ENCODE measurements at regions of chr10 and their contacts with region 1.

Region 1: GRCh38 chr10:71696628-71697326 is 22.8 kb downstream of the C10orf105 start:
- DNase-seq: peak; percentile 76
- H3K4me3 Mint-ChIP-seq: no peak overlapping the region
- H3K27ac Mint-ChIP-seq: no peak overlapping the region
- H3K4me1 Mint-ChIP-seq: peaks cover 35% of the 10 kb centered on the region
- H3K27me3 Mint-ChIP-seq: no peaks in the 10 kb centered on the region

Region 2: GRCh38 chr10:71314028-71314693 is 382.6 kb before region 1 on chr10:
- CTCF ChIA-PET with region 1: interaction called, 4 read pairs
- intact Hi-C with region 1: loop called (anchors 1 kb)
- DNase-seq: peak; percentile 62
- H3K4me3 Mint-ChIP-seq: no peak overlapping the region
- H3K27ac Mint-ChIP-seq: no peak overlapping the region
- H3K4me1 Mint-ChIP-seq: peaks cover 18% of the 10 kb centered on the region
- H3K27me3 Mint-ChIP-seq: peaks cover 5% of the 10 kb centered on the region

Region 3: GRCh38 chr10:71396084-71396720 is 300.6 kb before region 1 on chr10:
- CTCF ChIA-PET with region 1: interaction called, 5 read pairs
- intact Hi-C with region 1: loop called (anchors 2 kb)
- DNase-seq: peak; percentile 62
- H3K4me3 Mint-ChIP-seq: peak overlapping the region; percentile 45
- H3K27ac Mint-ChIP-seq: no peak overlapping the region
- H3K4me1 Mint-ChIP-seq: peaks cover 2% of the 10 kb centered on the region
- H3K27me3 Mint-ChIP-seq: peaks cover 58% of the 10 kb centered on the region

Region 4: GRCh38 chr10:71462062-71462935 is 234.5 kb before region 1 on chr10:
- CTCF ChIA-PET with region 1: no interaction called
- intact Hi-C with region 1: no loop called
- DNase-seq: no peak
- H3K4me3 Mint-ChIP-seq: no peak overlapping the region
- H3K27ac Mint-ChIP-seq: no peak overlapping the region
- H3K4me1 Mint-ChIP-seq: no peaks in the 10 kb centered on the region
- H3K27me3 Mint-ChIP-seq: no peaks in the 10 kb centered on the region

Region 5: GRCh38 chr10:71713135-71714030 is 16.6 kb after region 1 on chr10:
- CTCF ChIA-PET with region 1: interaction called, 138 read pairs
- intact Hi-C with region 1: no loop called
- DNase-seq: peak; percentile 54
- H3K4me3 Mint-ChIP-seq: peak overlapping the region; percentile 67
- H3K27ac Mint-ChIP-seq: peak overlapping the region; percentile 94
- H3K4me1 Mint-ChIP-seq: peaks cover 64% of the 10 kb centered on the region
- H3K27me3 Mint-ChIP-seq: no peaks in the 10 kb centered on the region

Region 6: GRCh38 chr10:71812016-71812912 is 115.5 kb after region 1 on chr10:
- CTCF ChIA-PET with region 1: interaction called, 25 read pairs
- intact Hi-C with region 1: no loop called
- DNase-seq: peak; percentile 83
- H3K4me3 Mint-ChIP-seq: no peak overlapping the region
- H3K27ac Mint-ChIP-seq: no peak overlapping the region
- H3K4me1 Mint-ChIP-seq: peaks cover 2% of the 10 kb centered on the region
- H3K27me3 Mint-ChIP-seq: no peaks in the 10 kb centered on the region

Region 7: DNA sequence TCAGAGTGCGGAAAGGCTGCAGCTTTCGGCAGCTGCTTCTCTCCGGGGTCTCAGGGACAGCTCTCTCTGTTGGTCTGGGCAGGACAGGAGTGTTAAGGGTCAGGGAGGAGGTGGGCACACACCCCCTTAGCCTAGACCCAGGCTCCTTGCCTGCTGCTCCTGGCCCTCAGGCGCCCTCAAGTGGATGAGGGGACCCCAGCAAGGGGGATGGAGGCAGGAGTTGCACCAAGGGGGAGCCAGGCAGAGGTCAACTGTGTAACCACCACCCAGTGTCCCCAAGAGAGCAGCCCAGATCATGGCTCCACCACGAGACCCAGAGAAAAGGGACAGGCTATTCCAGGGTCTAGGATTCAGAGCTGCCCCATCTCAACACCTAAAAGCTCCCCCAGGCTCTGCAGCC is 364.7 kb after region 1 on chr10:
- CTCF ChIA-PET with region 1: no interaction called
- intact Hi-C with region 1: no loop called
- DNase-seq: peak; percentile 35
- H3K4me3 Mint-ChIP-seq: no peak overlapping the region
- H3K27ac Mint-ChIP-seq: peak overlapping the region; percentile 50
- H3K4me1 Mint-ChIP-seq: peaks cover 31% of the 10 kb centered on the region
- H3K27me3 Mint-ChIP-seq: no peaks in the 10 kb centered on the region

Region 8: GRCh38 chr10:72552857-72553256 is 856.1 kb after region 1 on chr10:
- CTCF ChIA-PET with region 1: no interaction called
- intact Hi-C with region 1: no loop called
- DNase-seq: no peak
- H3K4me3 Mint-ChIP-seq: no peak overlapping the region
- H3K27ac Mint-ChIP-seq: no peak overlapping the region
- H3K4me1 Mint-ChIP-seq: no peaks in the 10 kb centered on the region
- H3K27me3 Mint-ChIP-seq: no peaks in the 10 kb centered on the region

Measured in activated naive CD4-positive, alpha-beta T cell treated with anti-CD3 and anti-CD28 coated beads for 36 hours (primary cell).